Heart left ventricle (tissue), 16 donors: ENCODE measurements at regions of chr6 and their contacts with region 1.

Region 1: GRCh38 chr6:11854408-11855165 is 76.0 kb upstream of the ADTRP start:
- DNase-seq: no peak
- ATAC-seq: peak in 2 of 4 donors; percentile 52 to 60
- H3K4me3 ChIP-seq: no peak overlapping the region
- H3K27ac ChIP-seq: no peak overlapping the region
- H3K4me1 ChIP-seq: peaks cover 0 to 15% (median 0%) of the 10 kb centered on the region in 12 donors
- H3K27me3 ChIP-seq: no peaks in the 10 kb centered on the region
- CTCF ChIP-seq: no peak
- POLR2A ChIP-seq: no peak

Region 2: DNA sequence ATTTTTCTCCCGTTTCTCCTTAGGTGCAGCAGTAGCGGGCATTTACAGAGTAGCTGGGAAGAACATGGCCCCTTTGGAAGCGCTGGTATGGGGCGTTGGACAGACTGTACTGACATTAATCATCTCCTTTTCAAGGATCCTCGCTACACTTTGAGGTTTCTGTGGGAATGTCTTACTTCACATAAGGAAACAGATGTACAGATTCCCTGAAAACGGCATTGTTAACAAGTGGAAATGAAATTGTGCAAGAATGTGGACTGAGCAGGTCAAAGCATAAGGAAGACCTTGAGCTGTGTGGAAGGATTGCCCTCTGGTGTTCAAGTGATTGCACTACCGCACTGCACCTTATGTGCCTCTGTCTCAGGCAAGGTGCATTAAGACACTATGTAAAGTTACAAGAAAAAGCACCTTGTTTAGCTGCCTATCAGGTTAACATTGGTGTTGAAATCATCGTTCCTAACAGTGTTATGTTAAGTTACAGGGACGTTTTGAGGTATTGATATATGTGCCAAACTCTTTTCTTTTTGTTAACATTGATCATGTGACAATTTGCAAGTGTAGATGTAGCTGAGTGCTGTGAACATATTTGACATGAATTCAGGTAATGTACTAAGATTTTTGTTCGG is 279.1 kb before region 1 on chr6:
- intact Hi-C with region 1: no loop called
- DNase-seq: peak in 4 of 5 donors; percentile 27 to 45 (median 39)
- ATAC-seq: peak; percentile 86 to 98 (median 96)
- H3K4me3 ChIP-seq: peak overlapping the region in 2 of 12 donors; percentile 5 to 10
- H3K27ac ChIP-seq: peak overlapping the region in 1 of 12 donors; percentile 24
- H3K4me1 ChIP-seq: peaks cover 0 to 8% (median 0%) of the 10 kb centered on the region in 12 donors
- H3K27me3 ChIP-seq: no peaks in the 10 kb centered on the region
- CTCF ChIP-seq: peak; percentile 75 to 91 (median 80)
- POLR2A ChIP-seq: no peak

Region 3: GRCh38 chr6:11810039-11810541 is 44.5 kb before region 1 on chr6:
- intact Hi-C with region 1: loop called in 1 of 10 experiments (anchors 5 kb)
- DNase-seq: peak; percentile 74 to 92 (median 84)
- ATAC-seq: peak; percentile 95 to 97 (median 95)
- H3K4me3 ChIP-seq: no peak overlapping the region
- H3K27ac ChIP-seq: peak overlapping the region in 11 of 12 donors; percentile 22 to 81 (median 69)
- H3K4me1 ChIP-seq: peaks cover 3 to 28% (median 15%) of the 10 kb centered on the region in 12 donors
- H3K27me3 ChIP-seq: no peaks in the 10 kb centered on the region
- CTCF ChIP-seq: no peak
- POLR2A ChIP-seq: no peak